Esophagus muscularis mucosa (tissue), 4 donors: ENCODE measurements at regions of chr2 and their contacts with region 1.

Region 1: DNA sequence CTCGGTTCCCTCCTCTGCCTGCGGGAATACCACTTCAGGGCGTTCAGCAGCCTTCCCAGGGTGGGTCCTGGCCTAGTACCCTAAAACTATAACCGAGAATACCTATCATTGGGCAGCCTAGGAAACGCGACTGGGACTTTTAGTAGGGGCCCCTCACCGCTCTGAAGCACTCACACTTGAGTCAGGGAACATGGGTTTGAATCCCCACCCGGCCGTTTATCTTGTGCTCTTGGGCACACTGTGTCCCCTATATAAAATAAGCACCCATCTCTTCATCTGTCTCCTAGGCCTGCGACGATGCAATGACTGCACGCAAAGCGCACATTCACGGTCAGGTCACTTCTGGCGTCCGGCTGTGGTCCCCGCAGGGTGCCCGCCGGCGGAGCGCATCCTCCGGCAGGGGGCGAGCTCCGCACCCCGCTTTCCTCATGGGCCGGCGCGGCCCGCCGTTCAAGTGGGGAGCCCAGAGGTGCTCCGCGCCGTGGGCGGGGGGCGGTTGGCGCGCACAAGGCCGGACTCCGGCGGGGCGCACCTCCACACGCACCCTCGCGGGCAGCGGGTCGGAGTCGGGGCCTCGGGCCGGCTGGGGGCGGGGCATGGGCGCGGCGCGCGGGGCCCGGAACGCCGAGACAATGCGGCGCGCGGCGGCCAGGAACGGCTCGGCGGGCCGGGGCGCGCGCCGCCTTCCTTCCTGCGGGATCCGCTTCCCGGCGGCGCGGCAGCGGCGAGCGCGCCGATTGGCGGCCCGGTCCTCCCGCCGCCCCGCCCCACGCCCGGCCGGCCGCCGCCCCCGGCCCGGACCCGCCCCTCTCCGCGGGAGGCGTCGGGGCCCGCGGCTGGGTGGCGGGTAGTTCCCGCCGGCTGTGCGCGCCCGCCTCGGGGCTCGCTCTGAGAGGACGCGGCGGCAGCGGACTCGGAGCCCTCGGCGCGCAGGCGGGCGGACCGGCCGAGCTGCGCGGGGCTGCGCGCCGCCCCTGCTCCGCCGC is at the start of gene ASAP2:
- DNase-seq: no peak
- H3K4me3 ChIP-seq: peak within 1 kb of the TSS; percentile 67 to 93 (median 83)
- H3K27ac ChIP-seq: peak within 1 kb of the TSS; percentile 84 to 89 (median 86)
- H3K4me1 ChIP-seq: peaks cover 11 to 49% (median 46%) of the 10 kb centered on the region in 4 donors
- H3K27me3 ChIP-seq: no peaks in the 10 kb centered on the region
- CTCF ChIP-seq: peak; percentile 70 to 92 (median 84)
- EP300 ChIP-seq: no peak
- POLR2A ChIP-seq: no peak
- total RNA-seq, gene ASAP2: 18.7 to 24.0 (median 21.3) TPM

Region 2: DNA sequence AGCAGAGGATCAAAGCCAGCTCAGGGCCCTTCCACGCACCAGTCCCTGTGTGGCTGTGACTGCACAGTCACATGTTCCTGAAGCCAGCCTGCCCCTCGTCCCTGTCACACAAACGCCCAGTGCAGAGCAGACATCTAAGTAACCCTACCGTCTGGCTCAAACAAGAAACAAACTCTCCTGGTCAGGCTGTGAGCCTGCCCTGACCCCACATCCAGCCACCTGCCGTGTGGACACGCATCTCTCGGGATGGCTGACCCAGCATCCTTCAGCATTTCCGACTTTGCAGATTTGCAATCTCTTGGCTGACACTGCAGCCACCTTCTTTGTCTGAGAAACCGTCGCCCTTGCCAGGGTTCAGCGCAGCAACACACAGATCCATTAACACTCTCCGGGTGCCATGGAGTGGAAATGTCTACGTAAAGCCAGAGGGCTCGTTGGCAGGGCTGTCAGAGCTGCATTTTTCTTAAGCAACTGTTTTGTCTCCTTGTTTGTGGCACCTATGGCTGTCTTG is 82.0 kb before region 1 on chr2:
- intact Hi-C with region 1: no loop called
- DNase-seq: no peak
- H3K4me3 ChIP-seq: no peak overlapping the region
- H3K27ac ChIP-seq: no peak overlapping the region
- H3K4me1 ChIP-seq: no peaks in the 10 kb centered on the region
- H3K27me3 ChIP-seq: no peaks in the 10 kb centered on the region
- CTCF ChIP-seq: no peak
- EP300 ChIP-seq: no peak
- POLR2A ChIP-seq: no peak

Region 3: GRCh38 chr2:9318461-9319337 is 112.4 kb after region 1 on chr2:
- intact Hi-C with region 1: loop called (anchors 5 kb)
- DNase-seq: no peak
- H3K4me3 ChIP-seq: peak overlapping the region in 1 of 4 donors; percentile 2
- H3K27ac ChIP-seq: peak overlapping the region; percentile 28 to 64 (median 58)
- H3K4me1 ChIP-seq: peaks cover 13 to 43% (median 32%) of the 10 kb centered on the region in 4 donors
- H3K27me3 ChIP-seq: no peaks in the 10 kb centered on the region
- CTCF ChIP-seq: no peak
- EP300 ChIP-seq: no peak
- POLR2A ChIP-seq: no peak

Region 4: GRCh38 chr2:9333591-9334171 is 127.4 kb after region 1 on chr2:
- intact Hi-C with region 1: loop called (anchors 1 kb)
- DNase-seq: no peak
- H3K4me3 ChIP-seq: no peak overlapping the region
- H3K27ac ChIP-seq: no peak overlapping the region
- H3K4me1 ChIP-seq: peaks cover 17 to 27% (median 22%) of the 10 kb centered on the region in 4 donors
- H3K27me3 ChIP-seq: no peaks in the 10 kb centered on the region
- CTCF ChIP-seq: peak; percentile 66 to 77 (median 71)
- EP300 ChIP-seq: no peak
- POLR2A ChIP-seq: no peak

Region 5: DNA sequence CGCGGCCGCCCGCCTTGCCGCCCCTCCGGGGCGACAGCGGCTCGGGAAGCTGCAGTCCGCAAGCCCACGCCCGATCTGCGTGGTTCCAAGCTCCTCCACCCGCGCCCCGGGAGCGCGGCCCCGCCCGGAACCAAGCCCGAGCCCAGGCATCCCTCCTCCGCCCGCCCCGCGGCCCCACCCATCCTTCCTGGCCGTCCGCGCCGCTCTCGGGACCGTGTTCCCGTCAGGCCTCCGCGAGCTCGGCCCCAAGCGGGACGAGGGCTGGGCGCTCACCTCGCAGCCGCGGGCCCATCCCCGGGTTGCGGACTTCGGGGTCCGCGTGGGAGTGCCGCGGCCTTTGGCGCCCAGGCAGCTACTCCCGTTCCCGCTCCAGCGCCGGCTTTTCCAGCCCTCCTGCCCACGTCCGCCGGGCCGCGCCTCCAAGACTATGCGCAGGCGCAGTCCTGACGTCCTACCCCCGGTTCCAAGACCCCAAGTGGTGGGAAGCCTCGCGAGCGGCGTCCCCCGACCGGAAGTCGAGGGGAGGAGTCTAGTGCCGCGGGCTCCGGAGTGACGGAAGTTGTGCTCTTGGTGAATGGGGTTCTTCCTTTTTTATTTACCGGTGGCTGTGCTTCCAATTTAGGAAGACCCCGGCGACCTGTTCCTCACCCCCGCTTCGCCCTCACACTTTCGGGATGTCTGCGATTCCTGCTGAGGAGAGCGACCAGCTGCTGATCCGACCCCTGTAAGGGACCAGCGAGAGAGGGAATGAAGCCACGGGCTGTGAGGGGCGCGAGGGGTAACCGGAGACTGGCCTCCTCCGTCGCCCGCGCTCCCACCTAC is 217.1 kb after region 1 on chr2 and contains the starts of genes CPSF3 and ITGB1BP1:
- intact Hi-C with region 1: loop called (anchors 10 kb)
- DNase-seq: peak; percentile 99
- H3K4me3 ChIP-seq: peak within 1 kb of the TSS; percentile 78 to 93 (median 92)
- H3K27ac ChIP-seq: peak within 1 kb of the TSS; percentile 93 to 95 (median 94)
- H3K4me1 ChIP-seq: peaks cover 26 to 52% (median 48%) of the 10 kb centered on the region in 4 donors
- H3K27me3 ChIP-seq: no peaks in the 10 kb centered on the region
- CTCF ChIP-seq: peak in 2 of 3 experiments; percentile 15 to 49
- EP300 ChIP-seq: no peak
- POLR2A ChIP-seq: peak; percentile 53
- total RNA-seq, gene CPSF3: 18.3 to 22.8 (median 20.7) TPM
- total RNA-seq, gene ITGB1BP1: 59.6 to 91.4 (median 66.1) TPM

Region 6: GRCh38 chr2:9508931-9509330 is 302.7 kb after region 1 on chr2:
- intact Hi-C with region 1: no loop called
- DNase-seq: peak; percentile 34
- H3K4me3 ChIP-seq: no peak overlapping the region
- H3K27ac ChIP-seq: no peak overlapping the region
- H3K4me1 ChIP-seq: no peaks in the 10 kb centered on the region
- H3K27me3 ChIP-seq: no peaks in the 10 kb centered on the region
- CTCF ChIP-seq: no peak
- EP300 ChIP-seq: no peak
- POLR2A ChIP-seq: no peak